ENCODE measurements at regions of chrX and their contacts with region 1.

Region 1: GRCh38 chrX:75603833-75604232 is 81.0 kb upstream of the ZDHHC15 start:
- DNase-seq: no peak
- ATAC-seq: no peak
- H3K4me3 Mint-ChIP-seq: no peak overlapping the region
- H3K27ac Mint-ChIP-seq: no peak overlapping the region
- H3K4me1 Mint-ChIP-seq: no peaks in the 10 kb centered on the region
- H3K27me3 Mint-ChIP-seq: no peaks in the 10 kb centered on the region

Region 2: DNA sequence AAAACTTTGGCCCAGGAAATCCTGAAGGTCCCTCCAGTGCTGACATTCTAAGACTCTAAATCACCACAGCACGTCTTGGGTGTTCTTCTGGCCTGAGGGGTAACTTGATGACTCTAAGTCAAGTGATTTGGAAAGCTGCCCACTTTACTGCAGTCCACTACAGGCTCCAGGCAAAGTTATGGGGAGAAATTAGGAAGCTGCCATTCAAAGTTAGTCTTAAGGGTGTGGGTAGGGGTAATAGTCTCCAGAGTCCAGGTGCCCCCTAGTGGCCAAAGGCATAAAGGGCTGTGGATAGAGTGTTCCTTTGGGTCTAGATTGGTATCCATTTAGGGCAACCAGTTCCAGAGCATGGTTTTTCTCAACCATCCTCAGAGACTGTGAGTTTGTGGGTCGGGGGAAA is 1221.2 kb before region 1 on chrX:
- CTCF ChIA-PET with region 1: no interaction called
- POLR2A ChIA-PET with region 1: no interaction called
- intact Hi-C with region 1: loop called in 1 of 2 experiments (anchors 10 kb)
- DNase-seq: peak; percentile 76
- ATAC-seq: peak; percentile 80
- H3K4me3 Mint-ChIP-seq: no peak overlapping the region
- H3K27ac Mint-ChIP-seq: no peak overlapping the region
- H3K4me1 Mint-ChIP-seq: no peaks in the 10 kb centered on the region
- H3K27me3 Mint-ChIP-seq: peaks cover 2% of the 10 kb centered on the region

Region 3: DNA sequence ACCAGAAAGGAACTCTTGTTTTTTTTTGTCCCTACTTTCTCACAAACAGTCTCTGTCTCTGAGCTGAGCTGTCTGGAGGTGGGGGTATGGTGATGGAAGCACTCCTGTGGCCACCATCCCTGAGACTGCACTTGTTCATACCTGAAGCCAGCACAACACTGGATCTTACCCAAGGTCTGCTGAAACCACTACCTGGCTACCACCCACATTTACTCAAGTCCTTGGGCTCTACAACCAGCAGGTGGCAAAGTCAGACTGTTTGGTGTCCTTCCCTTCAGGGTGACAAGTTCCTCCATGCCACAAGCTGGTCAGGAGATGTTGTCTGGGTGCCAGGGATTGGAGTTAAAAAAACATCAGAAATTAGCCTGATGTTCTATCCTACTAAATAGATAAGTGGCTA is 768.3 kb before region 1 on chrX:
- CTCF ChIA-PET with region 1: no interaction called
- POLR2A ChIA-PET with region 1: no interaction called
- intact Hi-C with region 1: loop called in 1 of 2 experiments (anchors 5 kb)
- DNase-seq: peak; percentile 3
- ATAC-seq: no peak
- H3K4me3 Mint-ChIP-seq: no peak overlapping the region
- H3K27ac Mint-ChIP-seq: no peak overlapping the region
- H3K4me1 Mint-ChIP-seq: no peaks in the 10 kb centered on the region
- H3K27me3 Mint-ChIP-seq: no peaks in the 10 kb centered on the region

Region 4: GRCh38 chrX:75038925-75039324 is 564.9 kb before region 1 on chrX:
- CTCF ChIA-PET with region 1: no interaction called
- POLR2A ChIA-PET with region 1: no interaction called
- intact Hi-C with region 1: loop called (anchors 1 to 2 kb)
- DNase-seq: peak; percentile 47
- ATAC-seq: peak; percentile 51
- H3K4me3 Mint-ChIP-seq: no peak overlapping the region
- H3K27ac Mint-ChIP-seq: no peak overlapping the region
- H3K4me1 Mint-ChIP-seq: no peaks in the 10 kb centered on the region
- H3K27me3 Mint-ChIP-seq: no peaks in the 10 kb centered on the region